Mammary epithelial cell (primary cell): ENCODE measurements at regions of chr4 and their contacts with region 1.

Region 1: GRCh38 chr4:181345931-181346330 is 897.3 kb upstream of the TENM3 start:
- DNase-seq: no peak
- H3K4me3 ChIP-seq: no peak overlapping the region
- H3K27ac ChIP-seq: no peak overlapping the region
- H3K4me1 ChIP-seq: no peaks in the 10 kb centered on the region
- H3K27me3 ChIP-seq: peaks cover 2% of the 10 kb centered on the region
- CTCF ChIP-seq: no peak

Region 2: DNA sequence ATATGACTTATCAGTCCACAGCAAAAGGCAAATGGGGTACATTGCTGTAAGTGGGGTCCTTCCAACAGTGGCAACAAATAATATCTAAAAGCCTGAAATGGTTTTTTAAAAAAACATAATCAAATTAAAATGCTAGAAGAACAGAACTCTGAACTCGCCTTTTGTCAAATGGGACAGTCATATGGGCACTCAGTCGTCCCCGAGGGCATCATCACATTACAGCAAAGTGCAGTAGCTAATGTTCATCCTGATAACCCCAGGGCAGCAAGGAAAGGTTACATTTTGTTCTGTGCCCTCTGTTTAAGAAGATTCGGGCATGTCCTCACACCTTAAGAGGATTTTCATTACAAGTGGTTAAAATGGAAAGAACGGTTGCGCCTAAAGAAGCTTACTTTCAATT is 100.6 kb before region 1 on chr4:
- CTCF ChIA-PET with region 1: interaction called, 12 read pairs
- dilution Hi-C with region 1: no loop called
- in situ Hi-C with region 1: no loop called
- intact Hi-C with region 1: no loop called
- DNase-seq: no peak
- H3K4me3 ChIP-seq: no peak overlapping the region
- H3K27ac ChIP-seq: no peak overlapping the region
- H3K4me1 ChIP-seq: no peaks in the 10 kb centered on the region
- H3K27me3 ChIP-seq: no peaks in the 10 kb centered on the region
- CTCF ChIP-seq: no peak